ENCODE measurements at regions of chr1 and their contacts with region 1.

Region 1: DNA sequence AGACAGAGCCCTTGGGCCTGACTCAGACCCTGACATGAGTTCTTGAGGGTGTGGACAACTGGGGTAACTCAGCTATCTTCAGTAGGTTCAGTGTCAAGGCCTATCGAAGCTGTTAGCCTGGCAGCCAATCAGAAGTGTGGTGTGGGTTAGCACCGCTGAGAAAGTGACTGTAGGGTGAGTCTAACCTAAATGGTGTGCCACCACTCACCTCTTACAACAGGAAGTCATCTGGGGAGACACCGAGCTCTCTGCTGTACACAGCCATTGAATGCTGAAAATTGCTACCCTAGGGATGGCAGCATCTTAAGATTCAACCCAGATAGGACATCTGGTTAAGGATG is 44.6 kb downstream of the RASSF5 start:
- DNase-seq: no peak
- H3K4me3 ChIP-seq: no peak overlapping the region
- H3K27ac ChIP-seq: no peak overlapping the region
- H3K4me1 ChIP-seq: peaks cover 0 to 7% (median 2%) of the 10 kb centered on the region in 4 experiments; a peak in 3 of 7 replicates
- H3K27me3 ChIP-seq: peaks cover 0 to 8% (median 5%) of the 10 kb centered on the region in 4 experiments; a peak in 4 of 7 replicates
- CTCF ChIP-seq: no peak
- EP300 ChIP-seq: no peak
- POLR2A ChIP-seq: no peak
- RAD21 ChIP-seq: no peak

Region 2: GRCh38 chr1:206563367-206564207 is 11.6 kb after region 1 on chr1:
- CTCF ChIA-PET with region 1: interaction called, 38 read pairs
- POLR2A ChIA-PET with region 1: no interaction called
- DNase-seq: no peak
- H3K4me3 ChIP-seq: no peak overlapping the region
- H3K27ac ChIP-seq: no peak overlapping the region
- H3K4me1 ChIP-seq: peaks cover 0 to under 1% (median 0%) of the 10 kb centered on the region in 4 experiments; a peak in 4 of 7 replicates
- H3K27me3 ChIP-seq: peaks cover 0 to 6% (median 2%) of the 10 kb centered on the region in 4 experiments; a peak in 3 of 7 replicates
- CTCF ChIP-seq: no peak
- EP300 ChIP-seq: no peak
- POLR2A ChIP-seq: no peak
- RAD21 ChIP-seq: no peak

Region 3: DNA sequence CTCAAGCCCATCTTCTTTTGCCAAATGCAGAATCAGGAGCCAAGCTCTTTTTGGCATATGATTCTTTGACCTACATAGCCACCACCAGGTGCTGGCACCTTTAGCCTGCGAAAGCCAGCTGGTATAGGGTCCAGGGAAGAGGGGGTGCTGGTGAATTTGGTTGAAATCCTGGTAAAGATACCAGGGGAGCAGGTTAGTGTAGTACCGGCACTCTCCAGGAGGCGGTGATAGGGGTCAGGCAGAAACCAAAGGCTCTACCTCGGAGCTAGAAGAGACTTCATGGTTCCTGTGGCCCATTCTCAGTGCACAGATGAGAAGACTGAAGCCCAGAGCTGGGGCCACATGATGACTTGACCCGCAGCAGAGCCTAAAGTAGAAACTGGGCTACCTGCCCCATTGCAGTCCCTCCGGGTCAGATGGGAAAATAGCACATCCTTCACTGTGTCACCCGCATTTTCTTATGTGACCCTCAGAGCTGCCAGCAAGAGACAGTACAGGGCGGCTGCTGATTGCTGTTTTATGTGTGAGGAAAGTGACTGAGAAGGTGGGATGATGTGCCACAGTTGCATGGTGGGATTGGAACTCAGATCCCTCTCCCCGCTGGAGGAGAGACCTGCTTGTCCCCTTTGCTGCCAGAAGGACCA is 182.7 kb after region 1 on chr1:
- CTCF ChIA-PET with region 1: no interaction called
- POLR2A ChIA-PET with region 1: no interaction called
- DNase-seq: peak in 1 of 2 experiments; percentile 94
- H3K4me3 ChIP-seq: no peak overlapping the region
- H3K27ac ChIP-seq: no peak overlapping the region
- H3K4me1 ChIP-seq: peaks cover 0 to 3% (median 0%) of the 10 kb centered on the region in 4 experiments; a peak in 2 of 7 replicates
- H3K27me3 ChIP-seq: no peaks in the 10 kb centered on the region
- CTCF ChIP-seq: peak; percentile 66 to 87 (median 86)
- EP300 ChIP-seq: no peak
- POLR2A ChIP-seq: no peak
- RAD21 ChIP-seq: peak; percentile 80 to 84

Measured in H1 (cell line).